Thyroid gland (tissue), 4 donors: ENCODE measurements at regions of chr2 and their contacts with region 1.

Region 1: GRCh38 chr2:9474361-9474967 is at the start of gene IAH1:
- DNase-seq: peak; percentile 55 to 61
- H3K4me3 ChIP-seq: peak within 1 kb of the TSS; percentile 56 to 73 (median 72)
- H3K27ac ChIP-seq: peak within 1 kb of the TSS; percentile 76 to 82 (median 82)
- H3K4me1 ChIP-seq: peaks cover 15 to 16% of the 10 kb centered on the region in 2 donors
- H3K27me3 ChIP-seq: no peaks in the 10 kb centered on the region
- CTCF ChIP-seq: peak in 1 of 6 experiments; percentile 9
- POLR2A ChIP-seq: peak in 1 of 2 donors; percentile 65
- total RNA-seq, gene IAH1: 50.3 to 83.7 (median 62.5) TPM

Region 2: DNA sequence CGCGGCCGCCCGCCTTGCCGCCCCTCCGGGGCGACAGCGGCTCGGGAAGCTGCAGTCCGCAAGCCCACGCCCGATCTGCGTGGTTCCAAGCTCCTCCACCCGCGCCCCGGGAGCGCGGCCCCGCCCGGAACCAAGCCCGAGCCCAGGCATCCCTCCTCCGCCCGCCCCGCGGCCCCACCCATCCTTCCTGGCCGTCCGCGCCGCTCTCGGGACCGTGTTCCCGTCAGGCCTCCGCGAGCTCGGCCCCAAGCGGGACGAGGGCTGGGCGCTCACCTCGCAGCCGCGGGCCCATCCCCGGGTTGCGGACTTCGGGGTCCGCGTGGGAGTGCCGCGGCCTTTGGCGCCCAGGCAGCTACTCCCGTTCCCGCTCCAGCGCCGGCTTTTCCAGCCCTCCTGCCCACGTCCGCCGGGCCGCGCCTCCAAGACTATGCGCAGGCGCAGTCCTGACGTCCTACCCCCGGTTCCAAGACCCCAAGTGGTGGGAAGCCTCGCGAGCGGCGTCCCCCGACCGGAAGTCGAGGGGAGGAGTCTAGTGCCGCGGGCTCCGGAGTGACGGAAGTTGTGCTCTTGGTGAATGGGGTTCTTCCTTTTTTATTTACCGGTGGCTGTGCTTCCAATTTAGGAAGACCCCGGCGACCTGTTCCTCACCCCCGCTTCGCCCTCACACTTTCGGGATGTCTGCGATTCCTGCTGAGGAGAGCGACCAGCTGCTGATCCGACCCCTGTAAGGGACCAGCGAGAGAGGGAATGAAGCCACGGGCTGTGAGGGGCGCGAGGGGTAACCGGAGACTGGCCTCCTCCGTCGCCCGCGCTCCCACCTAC is 51.2 kb before region 1 on chr2 and contains the starts of genes CPSF3 and ITGB1BP1:
- intact Hi-C with region 1: loop called (anchors 10 kb)
- DNase-seq: peak; percentile 97
- H3K4me3 ChIP-seq: peak within 1 kb of the TSS; percentile 34 to 96 (median 75)
- H3K27ac ChIP-seq: peak within 1 kb of the TSS; percentile 89 to 96 (median 91)
- H3K4me1 ChIP-seq: peaks cover 18 to 22% of the 10 kb centered on the region in 2 donors
- H3K27me3 ChIP-seq: no peaks in the 10 kb centered on the region
- CTCF ChIP-seq: peak in 3 of 6 experiments; percentile 21 to 33 (median 23)
- POLR2A ChIP-seq: peak in 1 of 2 donors; percentile 62
- total RNA-seq, gene CPSF3: 21.7 to 33.6 (median 29.1) TPM
- total RNA-seq, gene ITGB1BP1: 39.4 to 73.4 (median 45.8) TPM

Region 3: GRCh38 chr2:9555297-9556141 is 81.1 kb after region 1 on chr2 and contains the start of gene ADAM17:
- intact Hi-C with region 1: loop called (anchors 10 kb)
- DNase-seq: peak; percentile 97
- H3K4me3 ChIP-seq: peak within 1 kb of the TSS; percentile 56 to 92 (median 84)
- H3K27ac ChIP-seq: peak within 1 kb of the TSS; percentile 97 to 100 (median 99)
- H3K4me1 ChIP-seq: peaks cover 21 to 41% of the 10 kb centered on the region in 2 donors
- H3K27me3 ChIP-seq: no peaks in the 10 kb centered on the region
- CTCF ChIP-seq: peak in 4 of 6 experiments; percentile 23 to 82 (median 58)
- POLR2A ChIP-seq: peak; percentile 86 to 97
- total RNA-seq, gene ADAM17: 26.9 to 39.4 (median 31.3) TPM

Region 4: GRCh38 chr2:9630749-9631483 is 156.5 kb after region 1 on chr2 and contains the start of gene YWHAQ:
- intact Hi-C with region 1: loop called (anchors 10 kb)
- DNase-seq: peak; percentile 99 to 100
- H3K4me3 ChIP-seq: peak within 1 kb of the TSS; percentile 74 to 87 (median 80)
- H3K27ac ChIP-seq: peak within 1 kb of the TSS; percentile 80 to 90 (median 83)
- H3K4me1 ChIP-seq: peaks cover 29 to 37% of the 10 kb centered on the region in 2 donors
- H3K27me3 ChIP-seq: no peaks in the 10 kb centered on the region
- CTCF ChIP-seq: peak in 1 of 6 experiments; percentile 6
- POLR2A ChIP-seq: peak; percentile 91 to 96
- total RNA-seq, gene YWHAQ: 246 to 270 (median 265) TPM